Common myeloid progenitor, CD34-positive (primary cell): ENCODE measurements at regions of chr1 and their contacts with region 1.

Region 1: GRCh38 chr1:186605762-186606350 is 74.4 kb downstream of the PTGS2 start:
- DNase-seq: peak; percentile 74 to 85 (median 80)
- H3K4me3 ChIP-seq: no peak overlapping the region
- H3K27ac ChIP-seq: no peak overlapping the region
- H3K4me1 ChIP-seq: no peaks in the 10 kb centered on the region
- H3K27me3 ChIP-seq: no peaks in the 10 kb centered on the region

Region 2: GRCh38 chr1:186643600-186643999 is 37.7 kb after region 1 on chr1:
- CTCF ChIA-PET with region 1: no interaction called
- POLR2A ChIA-PET with region 1: no interaction called
- DNase-seq: no peak
- H3K4me3 ChIP-seq: no peak overlapping the region
- H3K27ac ChIP-seq: no peak overlapping the region
- H3K4me1 ChIP-seq: no peaks in the 10 kb centered on the region
- H3K27me3 ChIP-seq: no peaks in the 10 kb centered on the region

Region 3: DNA sequence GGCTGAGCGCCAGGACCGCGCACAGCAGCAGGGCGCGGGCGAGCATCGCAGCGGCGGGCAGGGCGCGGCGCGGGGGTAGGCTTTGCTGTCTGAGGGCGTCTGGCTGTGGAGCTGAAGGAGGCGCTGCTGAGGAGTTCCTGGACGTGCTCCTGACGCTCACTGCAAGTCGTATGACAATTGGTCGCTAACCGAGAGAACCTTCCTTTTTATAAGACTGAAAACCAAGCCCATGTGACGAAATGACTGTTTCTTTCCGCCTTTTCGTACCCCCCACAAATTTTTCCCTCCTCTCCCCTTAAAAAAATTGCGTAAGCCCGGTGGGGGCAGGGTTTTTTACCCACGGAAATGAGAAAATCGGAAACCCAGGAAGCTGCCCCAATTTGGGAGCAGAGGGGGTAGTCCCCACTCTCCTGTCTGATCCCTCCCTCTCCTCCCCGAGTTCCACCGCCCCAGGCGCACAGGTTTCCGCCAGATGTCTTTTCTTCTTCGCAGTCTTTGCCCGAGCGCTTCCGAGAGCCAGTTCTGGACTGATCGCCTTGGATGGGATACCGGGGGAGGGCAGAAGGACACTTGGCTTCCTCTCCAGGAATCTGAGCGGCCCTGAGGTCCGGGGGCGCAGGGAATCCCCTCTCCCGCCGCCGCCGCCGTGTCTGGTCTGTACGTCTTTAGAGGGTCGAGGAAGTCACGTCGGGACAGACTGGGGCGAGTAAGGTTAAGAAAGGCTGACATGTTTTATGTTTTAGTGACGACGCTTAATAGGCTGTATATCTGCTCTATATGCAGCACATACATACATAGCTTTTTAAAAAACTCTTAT is 74.6 kb after region 1 on chr1 and contains the start of gene PTGS2:
- CTCF ChIA-PET with region 1: interaction called, 44 read pairs
- POLR2A ChIA-PET with region 1: interaction called, 4 read pairs
- DNase-seq: peak; percentile 94 to 98 (median 97)
- H3K4me3 ChIP-seq: peak within 1 kb of the TSS; percentile 85 to 98 (median 88)
- H3K27ac ChIP-seq: peak within 1 kb of the TSS; percentile 90 to 94
- H3K4me1 ChIP-seq: peaks cover 5 to 36% (median 14%) of the 10 kb centered on the region in 4 experiments
- H3K27me3 ChIP-seq: no peaks in the 10 kb centered on the region

Region 4: GRCh38 chr1:186772228-186772627 is 166.4 kb after region 1 on chr1:
- CTCF ChIA-PET with region 1: interaction called, 10 read pairs
- POLR2A ChIA-PET with region 1: no interaction called
- DNase-seq: no peak
- H3K4me3 ChIP-seq: no peak overlapping the region
- H3K27ac ChIP-seq: no peak overlapping the region
- H3K4me1 ChIP-seq: peaks cover 2 to 17% (median 7%) of the 10 kb centered on the region in 4 experiments
- H3K27me3 ChIP-seq: no peaks in the 10 kb centered on the region

Region 5: GRCh38 chr1:186806477-186806876 is 200.6 kb after region 1 on chr1:
- CTCF ChIA-PET with region 1: interaction called, 32 read pairs
- POLR2A ChIA-PET with region 1: no interaction called
- DNase-seq: peak; percentile 48 to 57 (median 54)
- H3K4me3 ChIP-seq: no peak overlapping the region
- H3K27ac ChIP-seq: no peak overlapping the region
- H3K4me1 ChIP-seq: no peaks in the 10 kb centered on the region
- H3K27me3 ChIP-seq: no peaks in the 10 kb centered on the region

Region 6: GRCh38 chr1:186985889-186986491 is 380.1 kb after region 1 on chr1:
- CTCF ChIA-PET with region 1: interaction called, 30 read pairs
- POLR2A ChIA-PET with region 1: no interaction called
- DNase-seq: peak; percentile 66 to 80 (median 72)
- H3K4me3 ChIP-seq: no peak overlapping the region
- H3K27ac ChIP-seq: no peak overlapping the region
- H3K4me1 ChIP-seq: no peaks in the 10 kb centered on the region
- H3K27me3 ChIP-seq: no peaks in the 10 kb centered on the region

Region 7: DNA sequence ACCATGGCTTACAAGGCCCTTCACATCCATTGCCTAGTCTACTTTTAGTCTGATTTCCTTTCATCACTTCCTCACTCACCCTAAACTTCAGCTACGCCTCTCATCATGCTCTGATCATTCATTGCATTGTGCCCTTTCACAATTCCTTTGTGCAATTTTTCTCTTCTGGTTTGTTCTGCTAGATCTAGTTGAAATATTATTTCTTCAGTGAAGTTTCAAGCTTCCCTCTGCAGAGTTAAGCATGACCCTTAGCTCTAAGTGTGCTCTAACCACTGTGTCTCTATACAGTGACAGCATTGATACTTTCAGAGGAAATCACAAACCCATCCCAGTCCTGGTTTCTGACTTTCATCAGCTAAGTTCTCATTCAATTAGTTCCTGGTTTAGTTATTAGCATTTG is 389.0 kb after region 1 on chr1:
- CTCF ChIA-PET with region 1: interaction called, 11 read pairs
- POLR2A ChIA-PET with region 1: no interaction called
- DNase-seq: no peak
- H3K4me3 ChIP-seq: no peak overlapping the region
- H3K27ac ChIP-seq: no peak overlapping the region
- H3K4me1 ChIP-seq: peaks cover 0 to 2% (median 0%) of the 10 kb centered on the region in 4 experiments
- H3K27me3 ChIP-seq: no peaks in the 10 kb centered on the region

Region 8: DNA sequence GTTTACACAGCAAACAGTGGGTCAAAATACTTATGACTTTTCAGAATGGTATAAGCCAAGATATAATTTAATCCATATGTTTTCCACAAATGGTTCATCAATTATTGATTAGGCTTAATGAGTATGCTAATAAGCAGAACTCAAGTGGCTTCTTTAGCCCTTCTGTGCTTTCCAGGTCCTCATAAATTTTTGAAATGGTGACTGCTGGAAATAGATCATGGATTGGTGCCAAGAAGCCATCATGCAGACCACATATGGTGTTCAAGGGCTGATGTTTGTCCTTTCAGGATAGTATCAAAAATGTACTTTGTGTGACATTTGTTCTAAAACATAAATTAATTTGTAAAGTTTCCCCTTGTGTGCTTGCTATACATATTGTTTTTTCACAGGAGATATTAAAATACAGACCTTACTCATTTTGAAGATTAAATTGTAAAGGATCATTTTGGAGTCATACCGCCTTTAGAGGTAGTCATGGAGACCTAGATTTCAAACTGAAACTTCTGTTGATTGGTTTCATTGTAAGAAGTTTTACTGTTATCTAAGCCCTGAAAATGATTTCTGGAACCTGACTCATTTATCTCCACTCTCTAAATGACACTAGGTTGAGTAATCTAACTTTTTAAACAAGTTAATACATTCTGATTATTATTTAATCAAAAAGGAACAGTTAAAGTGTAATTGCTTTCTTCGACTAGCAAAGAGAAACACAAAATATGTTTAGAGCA is 730.7 kb after region 1 on chr1:
- CTCF ChIA-PET with region 1: no interaction called
- POLR2A ChIA-PET with region 1: no interaction called
- DNase-seq: no peak
- H3K4me3 ChIP-seq: no peak overlapping the region
- H3K27ac ChIP-seq: no peak overlapping the region
- H3K4me1 ChIP-seq: no peaks in the 10 kb centered on the region
- H3K27me3 ChIP-seq: no peaks in the 10 kb centered on the region